ENCODE measurements at regions of chr11 and their contacts with region 1.

Region 1: GRCh38 chr11:62081378-62082291 is 42.2 kb upstream of the INCENP start:
- DNase-seq: peak; percentile 61
- H3K4me3 Mint-ChIP-seq: no peak overlapping the region
- H3K27ac Mint-ChIP-seq: no peak overlapping the region
- H3K4me1 Mint-ChIP-seq: peaks cover 7% of the 10 kb centered on the region
- H3K27me3 Mint-ChIP-seq: no peaks in the 10 kb centered on the region

Region 2: GRCh38 chr11:61899146-61899841 is 182.3 kb before region 1 on chr11:
- intact Hi-C with region 1: loop called (anchors 1 kb)
- DNase-seq: peak; percentile 86
- H3K4me3 Mint-ChIP-seq: no peak overlapping the region
- H3K27ac Mint-ChIP-seq: no peak overlapping the region
- H3K4me1 Mint-ChIP-seq: peaks cover 5% of the 10 kb centered on the region
- H3K27me3 Mint-ChIP-seq: peaks cover 4% of the 10 kb centered on the region

Region 3: GRCh38 chr11:61954851-61955421 is 126.7 kb before region 1 on chr11:
- intact Hi-C with region 1: no loop called
- DNase-seq: no peak
- H3K4me3 Mint-ChIP-seq: no peak overlapping the region
- H3K27ac Mint-ChIP-seq: no peak overlapping the region
- H3K4me1 Mint-ChIP-seq: peaks cover 6% of the 10 kb centered on the region
- H3K27me3 Mint-ChIP-seq: peaks cover 19% of the 10 kb centered on the region

Region 4: GRCh38 chr11:62025487-62026105 is 56.0 kb before region 1 on chr11:
- intact Hi-C with region 1: loop called (anchors 1 kb)
- DNase-seq: peak; percentile 75
- H3K4me3 Mint-ChIP-seq: peak overlapping the region; percentile 59
- H3K27ac Mint-ChIP-seq: peak overlapping the region; percentile 90
- H3K4me1 Mint-ChIP-seq: peaks cover 20% of the 10 kb centered on the region
- H3K27me3 Mint-ChIP-seq: peaks cover 3% of the 10 kb centered on the region

Region 5: GRCh38 chr11:62193952-62194351 is 112.3 kb after region 1 on chr11:
- intact Hi-C with region 1: no loop called
- DNase-seq: no peak
- H3K4me3 Mint-ChIP-seq: no peak overlapping the region
- H3K27ac Mint-ChIP-seq: no peak overlapping the region
- H3K4me1 Mint-ChIP-seq: no peaks in the 10 kb centered on the region
- H3K27me3 Mint-ChIP-seq: peaks cover 21% of the 10 kb centered on the region